ENCODE measurements at regions of chr13 and their contacts with region 1.

Region 1: GRCh38 chr13:46668302-46668720 is 115.3 kb downstream of the LRCH1 start:
- DNase-seq: peak in 1 of 2 donors; percentile 30
- ATAC-seq: peak; percentile 30 to 46 (median 38)
- H3K4me3 ChIP-seq: peak overlapping the region; percentile 50
- H3K4me3 Mint-ChIP-seq: peak overlapping the region; percentile 91
- H3K27ac ChIP-seq: peak overlapping the region; percentile 96
- H3K27ac Mint-ChIP-seq: peak overlapping the region; percentile 91 to 95
- H3K4me1 ChIP-seq: peaks cover 22% of the 10 kb centered on the region
- H3K4me1 Mint-ChIP-seq: peaks cover 48 to 57% of the 10 kb centered on the region in 2 donors
- H3K27me3 ChIP-seq: no peaks in the 10 kb centered on the region
- H3K27me3 Mint-ChIP-seq: no peaks in the 10 kb centered on the region
- CTCF ChIP-seq: no peak

Region 2: GRCh38 chr13:46607768-46608564 is 60.3 kb before region 1 on chr13:
- intact Hi-C with region 1: no loop called
- DNase-seq: no peak
- ATAC-seq: peak in 1 of 3 donors; percentile 24
- H3K4me3 ChIP-seq: no peak overlapping the region
- H3K4me3 Mint-ChIP-seq: no peak overlapping the region
- H3K27ac ChIP-seq: no peak overlapping the region
- H3K27ac Mint-ChIP-seq: peak overlapping the region; percentile 49 to 83
- H3K4me1 ChIP-seq: peaks cover 23% of the 10 kb centered on the region
- H3K4me1 Mint-ChIP-seq: peaks cover 57 to 66% of the 10 kb centered on the region in 2 donors
- H3K27me3 ChIP-seq: no peaks in the 10 kb centered on the region
- H3K27me3 Mint-ChIP-seq: no peaks in the 10 kb centered on the region
- CTCF ChIP-seq: no peak

Region 3: GRCh38 chr13:46633416-46633815 is 34.9 kb before region 1 on chr13:
- intact Hi-C with region 1: loop called (anchors 5 kb)
- DNase-seq: no peak
- ATAC-seq: no peak
- H3K4me3 ChIP-seq: no peak overlapping the region
- H3K4me3 Mint-ChIP-seq: no peak overlapping the region
- H3K27ac ChIP-seq: no peak overlapping the region
- H3K27ac Mint-ChIP-seq: no peak overlapping the region
- H3K4me1 ChIP-seq: no peaks in the 10 kb centered on the region
- H3K4me1 Mint-ChIP-seq: peaks cover 61 to 65% of the 10 kb centered on the region in 2 donors
- H3K27me3 ChIP-seq: no peaks in the 10 kb centered on the region
- H3K27me3 Mint-ChIP-seq: no peaks in the 10 kb centered on the region
- CTCF ChIP-seq: no peak

Region 4: GRCh38 chr13:47350334-47351124 is 682.2 kb after region 1 on chr13:
- intact Hi-C with region 1: no loop called
- DNase-seq: no peak
- ATAC-seq: no peak
- H3K4me3 ChIP-seq: no peak overlapping the region
- H3K4me3 Mint-ChIP-seq: no peak overlapping the region
- H3K27ac ChIP-seq: no peak overlapping the region
- H3K27ac Mint-ChIP-seq: no peak overlapping the region
- H3K4me1 ChIP-seq: no peaks in the 10 kb centered on the region
- H3K4me1 Mint-ChIP-seq: no peaks in the 10 kb centered on the region
- H3K27me3 ChIP-seq: no peaks in the 10 kb centered on the region
- H3K27me3 Mint-ChIP-seq: no peaks in the 10 kb centered on the region
- CTCF ChIP-seq: no peak

Measured in natural killer cell (primary cell).